ENCODE measurements at regions of chr14 and their contacts with region 1.

Region 1: GRCh38 chr14:24431569-24432258 is 2.0 kb downstream of the KHNYN start:
- DNase-seq: peak; percentile 72 to 91 (median 80)
- ATAC-seq: peak; percentile 80
- H3K4me3 ChIP-seq: no peak overlapping the region
- H3K27ac ChIP-seq: no peak overlapping the region
- H3K4me1 ChIP-seq: peaks cover 21 to 53% of the 10 kb centered on the region in 2 experiments
- H3K27me3 ChIP-seq: no peaks in the 10 kb centered on the region
- CTCF ChIP-seq: peak; percentile 87 to 93 (median 91)
- EP300 ChIP-seq: no peak
- POLR2A ChIP-seq: no peak
- RAD21 ChIP-seq: peak; percentile 74 to 90

Region 2: DNA sequence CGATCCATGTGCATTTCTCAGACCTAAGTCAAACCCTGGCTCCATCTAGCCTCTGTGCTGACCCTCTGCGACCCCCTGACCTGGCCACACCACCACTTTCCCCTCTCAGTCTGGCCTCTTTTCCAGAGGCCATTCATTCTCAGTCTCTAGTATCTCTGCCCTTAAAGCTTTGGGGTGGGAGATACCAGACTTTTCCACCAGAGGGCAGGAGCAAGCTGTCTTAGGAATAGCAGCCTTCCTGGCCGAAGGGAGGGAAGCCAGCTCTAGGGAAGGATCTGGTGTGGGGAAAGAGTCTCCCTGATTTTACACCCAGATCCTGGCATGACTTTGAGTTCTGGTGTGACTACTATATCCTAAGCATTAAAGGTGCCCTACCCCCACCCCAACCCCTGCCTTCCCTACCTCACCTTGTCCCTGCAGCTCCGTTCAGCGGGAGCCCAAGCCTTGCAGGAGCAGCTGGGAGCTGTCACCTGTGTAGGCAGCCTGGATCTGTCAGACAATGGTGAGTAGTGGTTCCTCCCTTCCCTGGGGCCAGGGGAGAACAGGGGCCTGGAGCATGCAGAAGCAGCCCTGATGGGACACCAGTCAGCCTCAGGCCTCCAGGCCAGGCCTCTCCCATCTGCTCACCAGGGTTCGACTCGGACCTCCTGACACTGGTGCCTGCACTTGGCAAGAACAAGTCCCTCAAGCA is 373.3 kb before region 1 on chr14:
- CTCF ChIA-PET with region 1: no interaction called
- POLR2A ChIA-PET with region 1: no interaction called
- in situ Hi-C with region 1: loop called (anchors 10 kb)
- intact Hi-C with region 1: no loop called
- DNase-seq: peak in 2 of 4 experiments; percentile 59 to 64
- ATAC-seq: peak; percentile 92
- H3K4me3 ChIP-seq: no peak overlapping the region
- H3K27ac ChIP-seq: no peak overlapping the region
- H3K4me1 ChIP-seq: peaks cover 0 to 6% of the 10 kb centered on the region in 2 experiments; a peak in 3 of 5 replicates
- H3K27me3 ChIP-seq: peaks cover 0 to 19% of the 10 kb centered on the region in 2 experiments; a peak in 2 of 5 replicates
- CTCF ChIP-seq: peak; percentile 72 to 82 (median 76)
- EP300 ChIP-seq: no peak
- POLR2A ChIP-seq: no peak
- RAD21 ChIP-seq: peak; percentile 83 to 92

Region 3: DNA sequence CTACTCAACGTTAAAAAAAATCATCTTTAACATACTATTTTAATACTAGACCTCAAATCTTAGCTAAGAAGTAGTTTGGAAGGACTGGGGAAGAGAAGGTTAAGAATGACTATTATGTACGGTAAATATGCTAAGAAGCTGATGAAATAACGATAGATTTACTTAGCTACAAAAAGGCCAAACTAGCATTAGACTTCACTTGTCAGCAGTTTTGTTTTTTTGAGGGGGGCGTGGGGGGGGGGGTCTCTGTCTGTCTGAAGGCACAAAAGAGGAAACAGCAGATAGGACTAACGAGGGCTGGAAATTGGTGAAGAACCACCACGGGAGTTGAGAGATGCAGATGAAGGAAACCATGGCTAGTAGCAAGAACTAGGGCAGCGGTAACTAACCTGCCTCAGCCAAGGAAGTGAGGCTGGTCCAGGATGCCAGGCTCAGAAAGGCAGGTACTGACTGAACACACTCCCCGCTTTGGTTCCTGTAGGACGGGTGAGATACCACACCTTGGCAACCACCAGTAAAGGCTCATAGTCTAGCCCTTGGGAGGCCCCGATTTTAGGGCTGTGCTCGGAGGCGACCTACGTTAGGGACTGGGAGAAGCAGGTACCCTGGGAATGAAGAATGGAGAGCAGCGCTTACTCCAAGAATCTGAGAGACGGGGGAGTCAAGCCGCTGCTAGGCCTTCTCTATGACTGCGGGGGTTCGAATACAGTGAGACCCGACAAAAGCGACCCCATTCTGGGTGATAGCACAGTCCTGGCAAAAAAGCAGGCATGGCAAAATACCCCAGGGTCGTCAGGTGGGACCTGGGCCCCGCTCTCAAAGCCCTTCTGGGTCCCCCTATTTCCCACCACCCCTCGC is 200.2 kb before region 1 on chr14:
- CTCF ChIA-PET with region 1: no interaction called
- POLR2A ChIA-PET with region 1: no interaction called
- in situ Hi-C with region 1: no loop called
- intact Hi-C with region 1: no loop called
- DNase-seq: peak in 3 of 4 experiments; percentile 16 to 18 (median 17)
- ATAC-seq: peak; percentile 44
- H3K4me3 ChIP-seq: peak overlapping the region; percentile 54
- H3K27ac ChIP-seq: peak overlapping the region; percentile 89
- H3K4me1 ChIP-seq: peaks cover 6 to 15% of the 10 kb centered on the region in 2 experiments
- H3K27me3 ChIP-seq: no peaks in the 10 kb centered on the region
- CTCF ChIP-seq: no peak
- EP300 ChIP-seq: no peak
- POLR2A ChIP-seq: no peak
- RAD21 ChIP-seq: no peak

Region 4: GRCh38 chr14:24241829-24242443 is 189.8 kb before region 1 on chr14:
- CTCF ChIA-PET with region 1: no interaction called
- POLR2A ChIA-PET with region 1: interaction called, 7 read pairs
- in situ Hi-C with region 1: loop called (anchors 10 kb)
- intact Hi-C with region 1: loop called (anchors 2 kb)
- DNase-seq: peak; percentile 92 to 95 (median 92)
- ATAC-seq: peak; percentile 94
- H3K4me3 ChIP-seq: peak overlapping the region; percentile 59
- H3K27ac ChIP-seq: peak overlapping the region; percentile 98
- H3K4me1 ChIP-seq: peaks cover 13 to 15% of the 10 kb centered on the region in 2 experiments; a peak in 4 of 5 replicates
- H3K27me3 ChIP-seq: no peaks in the 10 kb centered on the region
- CTCF ChIP-seq: peak; percentile 13 to 49 (median 42); a peak in 2 of 6 replicates
- EP300 ChIP-seq: no peak
- POLR2A ChIP-seq: no peak
- RAD21 ChIP-seq: no peak

Region 5: GRCh38 chr14:24332268-24332993 is 99.3 kb before region 1 on chr14:
- CTCF ChIA-PET with region 1: interaction called, 35 read pairs
- POLR2A ChIA-PET with region 1: interaction called, 25 read pairs
- in situ Hi-C with region 1: loop called (anchors 5 kb)
- intact Hi-C with region 1: loop called (anchors 1 kb)
- DNase-seq: peak; percentile 76 to 81 (median 78)
- ATAC-seq: peak; percentile 83
- H3K4me3 ChIP-seq: peak overlapping the region; percentile 21
- H3K27ac ChIP-seq: no peak overlapping the region
- H3K4me1 ChIP-seq: peaks cover 5 to 36% of the 10 kb centered on the region in 2 experiments; a peak in 4 of 5 replicates
- H3K27me3 ChIP-seq: peaks cover 0 to 8% of the 10 kb centered on the region in 2 experiments; a peak in 1 of 5 replicates
- CTCF ChIP-seq: peak; percentile 70 to 85 (median 72)
- EP300 ChIP-seq: no peak
- POLR2A ChIP-seq: no peak
- RAD21 ChIP-seq: peak; percentile 33 to 48; a peak in 3 of 4 replicates

Region 6: DNA sequence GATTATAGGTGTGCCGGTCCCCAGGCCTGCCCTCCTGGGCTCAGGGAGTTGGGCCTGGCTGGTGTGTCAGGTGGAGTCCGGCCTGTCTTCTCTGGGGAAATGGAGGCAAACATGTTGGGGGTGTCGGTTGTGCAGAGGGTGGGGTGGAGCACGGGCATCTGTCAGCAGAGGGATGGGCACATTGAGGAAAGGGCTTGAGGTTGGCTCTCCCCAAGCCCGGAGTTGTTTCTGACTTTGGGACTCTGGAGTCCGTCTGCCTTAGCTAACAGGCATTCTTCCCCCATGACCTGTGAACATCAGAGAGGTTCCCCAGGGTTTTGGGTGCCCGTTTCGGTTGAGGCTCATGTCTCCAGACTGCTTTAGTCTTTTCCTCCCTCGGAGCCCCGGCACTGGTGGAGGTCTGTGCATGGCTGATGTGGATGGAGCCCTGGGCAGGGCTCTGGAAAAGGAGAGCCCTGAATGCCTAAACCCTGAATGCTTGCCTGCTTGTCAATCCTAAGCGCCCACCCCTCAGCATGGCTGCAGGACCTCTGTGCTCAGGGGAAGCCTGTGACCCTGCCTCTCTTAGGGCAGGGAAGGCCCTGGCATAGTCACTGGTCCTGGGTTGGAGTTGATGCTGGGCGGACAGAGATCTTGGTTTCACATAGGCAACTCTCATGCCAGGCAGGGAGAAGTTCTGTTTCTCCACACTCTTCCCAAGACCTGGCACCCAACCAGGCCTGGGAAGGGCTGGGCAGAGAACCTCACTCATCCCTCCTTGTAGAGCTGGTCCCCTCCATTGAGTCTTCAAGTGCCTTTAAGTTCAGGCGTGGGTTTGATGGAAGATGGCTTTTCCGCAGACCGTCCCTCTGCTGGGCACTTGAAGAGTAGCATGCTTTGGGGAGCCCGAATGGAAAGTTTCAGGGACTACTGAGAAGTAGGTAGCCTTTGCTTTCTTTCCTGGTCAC is 20.0 kb before region 1 on chr14:
- CTCF ChIA-PET with region 1: interaction called, 3 read pairs
- POLR2A ChIA-PET with region 1: interaction called, 11 read pairs
- in situ Hi-C with region 1: no loop called
- intact Hi-C with region 1: no loop called
- DNase-seq: peak; percentile 52 to 68 (median 53)
- ATAC-seq: peak; percentile 83
- H3K4me3 ChIP-seq: no peak overlapping the region
- H3K27ac ChIP-seq: no peak overlapping the region
- H3K4me1 ChIP-seq: peaks cover 4 to 30% of the 10 kb centered on the region in 2 experiments; a peak in 4 of 5 replicates
- H3K27me3 ChIP-seq: peaks cover 0 to 8% of the 10 kb centered on the region in 2 experiments; a peak in 1 of 5 replicates
- CTCF ChIP-seq: peak; percentile 64 to 73 (median 72)
- EP300 ChIP-seq: no peak
- POLR2A ChIP-seq: no peak
- RAD21 ChIP-seq: peak; percentile 10 to 68; a peak in 2 of 4 replicates

Region 7: GRCh38 chr14:24442273-24443052 is 10.7 kb after region 1 on chr14 and contains the start of gene SDR39U1:
- CTCF ChIA-PET with region 1: no interaction called
- POLR2A ChIA-PET with region 1: interaction called, 43 read pairs
- in situ Hi-C with region 1: no loop called
- intact Hi-C with region 1: no loop called
- DNase-seq: peak; percentile 84 to 97 (median 90)
- ATAC-seq: peak; percentile 96
- H3K4me3 ChIP-seq: peak within 1 kb of the TSS; percentile 68
- H3K27ac ChIP-seq: peak within 1 kb of the TSS; percentile 91
- H3K4me1 ChIP-seq: peaks cover 0 to 10% of the 10 kb centered on the region in 2 experiments; a peak in 2 of 5 replicates
- H3K27me3 ChIP-seq: no peaks in the 10 kb centered on the region
- CTCF ChIP-seq: 0 out of 6 replicates have a peak, but pooled peaks of 1 of the 3 experiments have one; percentile 15
- EP300 ChIP-seq: no peak
- POLR2A ChIP-seq: peak; percentile 90
- RAD21 ChIP-seq: no peak
- polyA plus RNA-seq, gene SDR39U1: 11.0 to 18.6 TPM